WTC11 (cell line): ENCODE measurements at regions of chr3 and their contacts with region 1.

Region 1: DNA sequence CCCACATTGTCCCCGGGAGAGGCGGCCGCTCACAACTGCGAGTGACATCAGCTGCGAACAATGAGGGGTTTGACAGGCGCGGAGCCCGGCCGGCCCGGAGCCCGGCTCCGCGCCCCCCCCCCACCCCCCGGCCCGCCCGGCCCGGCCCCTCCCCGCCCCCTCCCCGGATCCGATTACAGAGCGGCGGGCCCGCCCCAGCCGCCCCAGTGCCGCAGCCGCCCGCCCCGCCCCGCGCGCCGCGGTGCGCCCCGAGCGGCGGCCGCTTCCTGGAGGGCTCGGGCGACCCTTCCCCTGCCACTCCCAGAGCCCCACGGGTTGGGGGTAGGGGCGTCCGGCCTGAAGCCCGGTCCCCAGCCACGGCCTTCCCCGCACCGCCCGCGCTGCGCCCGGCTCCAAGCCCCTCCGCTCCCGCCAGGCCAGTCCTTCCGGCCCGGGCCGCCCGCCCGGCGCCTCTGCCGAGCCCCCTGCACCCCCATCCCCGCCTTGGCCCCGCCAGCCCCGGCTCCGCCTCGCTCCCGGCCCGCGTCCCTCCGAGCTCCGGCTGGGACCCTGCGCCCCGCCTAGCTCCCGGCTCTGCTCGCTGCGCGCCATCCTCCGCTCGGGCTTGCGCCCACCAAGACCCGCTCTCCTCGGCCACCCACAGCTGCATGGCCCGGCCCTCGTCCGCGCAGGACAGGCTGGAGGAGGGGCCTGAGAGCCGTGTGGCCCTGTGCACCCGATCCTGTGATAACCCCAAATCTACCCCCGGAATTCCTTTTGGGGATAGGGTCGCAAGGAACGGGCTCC is at the start of gene PCBP4:
- DNase-seq: peak; percentile 69
- ATAC-seq: peak; percentile 40
- H3K4me3 Mint-ChIP-seq: peak within 1 kb of the TSS; percentile 81
- H3K27ac Mint-ChIP-seq: no peak within 1 kb of the TSS; the same call in 1 of the 2 replicates
- H3K4me1 Mint-ChIP-seq: peaks cover 49% of the 10 kb centered on the region
- H3K27me3 Mint-ChIP-seq: peaks cover 22% of the 10 kb centered on the region
- CTCF ChIP-seq: no peak
- total RNA-seq, gene PCBP4: 28.7 to 31.6 TPM (median 30.6 TPM) in 3 replicates

Region 2: DNA sequence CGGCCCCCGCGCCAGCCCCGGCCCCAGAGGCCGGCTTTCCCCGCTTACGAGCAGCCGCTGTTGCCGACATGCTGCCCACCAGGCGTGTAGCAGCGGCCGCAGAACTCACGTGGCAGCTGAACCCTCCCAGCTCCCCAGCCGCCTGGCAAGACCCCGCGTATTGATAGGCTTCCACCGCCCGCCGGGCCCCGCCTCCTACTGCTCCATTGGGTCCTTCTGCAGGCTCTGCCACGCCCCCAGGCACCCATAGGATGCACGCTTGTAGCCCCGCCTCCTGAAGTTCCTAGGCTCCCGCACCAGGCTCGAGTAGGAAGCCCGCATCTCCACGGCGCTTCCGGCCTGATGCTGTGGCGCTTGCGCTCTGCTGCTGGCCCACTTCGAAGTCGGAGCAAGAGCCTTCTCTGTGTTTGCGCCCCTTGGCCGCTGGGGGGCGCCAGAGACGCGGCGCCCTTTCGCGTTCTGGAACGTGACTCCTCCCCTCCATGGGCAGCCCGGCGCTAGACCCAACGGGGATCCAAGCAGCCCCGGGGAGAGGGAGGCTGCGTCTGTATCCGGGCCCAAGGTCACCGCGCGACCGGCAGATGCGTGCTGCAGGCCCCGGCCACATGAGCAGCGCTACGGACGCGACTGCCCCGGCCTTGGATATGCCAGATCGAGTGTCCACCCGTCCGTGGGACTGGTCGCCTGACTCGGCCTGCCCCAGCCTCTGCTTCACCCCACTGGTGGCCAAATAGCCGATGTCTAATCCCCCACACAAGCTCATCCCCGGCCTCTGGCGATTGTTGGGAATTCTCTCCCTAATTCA is 25.6 kb before region 1 on chr3 and contains the starts of genes PARP3 and RRP9:
- CTCF ChIA-PET with region 1: interaction called, 49 read pairs
- POLR2A ChIA-PET with region 1: interaction called, 19 read pairs
- DNase-seq: peak; percentile 100
- ATAC-seq: peak; percentile 96
- H3K4me3 Mint-ChIP-seq: peak within 1 kb of the TSS; percentile 91
- H3K27ac Mint-ChIP-seq: no peak within 1 kb of the TSS
- H3K4me1 Mint-ChIP-seq: peaks cover 17% of the 10 kb centered on the region
- H3K27me3 Mint-ChIP-seq: no peaks in the 10 kb centered on the region; the same call in 1 of the 2 replicates
- CTCF ChIP-seq: peak; percentile 99
- total RNA-seq, gene PARP3: 2.8 to 2.9 TPM (median 2.8 TPM) in 3 replicates
- total RNA-seq, gene RRP9: 47.0 to 49.9 TPM (median 49.4 TPM) in 3 replicates

Region 3: GRCh38 chr3:51995346-51996163 is 28.0 kb after region 1 on chr3 and contains the start of gene RPL29:
- CTCF ChIA-PET with region 1: interaction called, 11 read pairs
- POLR2A ChIA-PET with region 1: interaction called, 5 read pairs
- DNase-seq: peak; percentile 92
- ATAC-seq: peak; percentile 85
- H3K4me3 Mint-ChIP-seq: peak within 1 kb of the TSS; percentile 99
- H3K27ac Mint-ChIP-seq: peak within 1 kb of the TSS; percentile 100
- H3K4me1 Mint-ChIP-seq: peaks cover 33% of the 10 kb centered on the region
- H3K27me3 Mint-ChIP-seq: no peaks in the 10 kb centered on the region
- CTCF ChIP-seq: no peak
- total RNA-seq, gene RPL29: 1,343 to 1,592 TPM (median 1,542 TPM) in 3 replicates

Region 4: GRCh38 chr3:52090131-52090932 is 122.8 kb after region 1 on chr3:
- CTCF ChIA-PET with region 1: no interaction called
- POLR2A ChIA-PET with region 1: no interaction called
- DNase-seq: no peak
- ATAC-seq: no peak
- H3K4me3 Mint-ChIP-seq: no peak overlapping the region
- H3K27ac Mint-ChIP-seq: no peak overlapping the region; the same call in 1 of the 2 replicates
- H3K4me1 Mint-ChIP-seq: no peaks in the 10 kb centered on the region
- H3K27me3 Mint-ChIP-seq: no peaks in the 10 kb centered on the region
- CTCF ChIP-seq: no peak

Region 5: DNA sequence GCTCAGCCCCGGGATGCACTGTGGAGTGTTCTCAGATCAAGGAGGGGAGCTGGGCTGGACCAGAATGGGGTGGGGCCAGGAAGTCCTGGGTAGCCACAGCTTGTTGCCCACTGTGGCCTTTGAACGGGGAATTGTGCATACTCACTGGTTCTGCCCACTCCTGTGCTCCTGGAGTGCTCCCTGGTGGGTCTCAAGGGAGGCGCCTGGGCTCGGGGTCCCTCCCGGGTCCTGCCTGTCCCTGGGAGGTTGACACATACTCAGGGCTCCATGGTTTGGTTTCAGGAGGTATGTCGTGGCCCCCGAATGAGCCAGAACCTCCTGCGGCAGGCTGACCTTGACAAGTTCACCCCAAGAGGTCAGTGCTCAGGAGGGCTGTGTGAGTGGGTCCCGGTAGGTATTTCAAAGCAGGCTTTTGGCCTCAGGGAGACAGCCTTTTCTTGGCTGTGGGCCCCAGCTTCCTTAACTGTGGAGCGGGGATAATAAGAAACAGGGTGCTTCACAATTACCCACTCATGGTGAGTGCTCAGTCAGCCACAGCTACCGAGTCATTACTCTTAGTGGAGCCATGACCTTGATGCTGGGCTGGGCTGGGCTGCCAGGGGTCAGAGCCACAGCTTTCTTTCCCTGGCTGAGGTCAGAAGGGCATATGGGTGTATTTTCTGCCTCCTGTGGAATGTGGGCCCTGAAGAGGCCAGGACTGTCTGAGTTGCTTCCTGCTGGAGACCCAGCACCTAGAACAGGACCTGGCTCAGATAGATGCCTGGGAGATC is 356.1 kb after region 1 on chr3:
- CTCF ChIA-PET with region 1: no interaction called
- POLR2A ChIA-PET with region 1: no interaction called
- DNase-seq: no peak
- ATAC-seq: no peak
- H3K4me3 Mint-ChIP-seq: no peak overlapping the region
- H3K27ac Mint-ChIP-seq: no peak overlapping the region
- H3K4me1 Mint-ChIP-seq: no peaks in the 10 kb centered on the region
- H3K27me3 Mint-ChIP-seq: peaks cover 10% of the 10 kb centered on the region
- CTCF ChIP-seq: no peak